MCF 10A (cell line): ENCODE measurements at regions of chr1 and their contacts with region 1.

Region 1: DNA sequence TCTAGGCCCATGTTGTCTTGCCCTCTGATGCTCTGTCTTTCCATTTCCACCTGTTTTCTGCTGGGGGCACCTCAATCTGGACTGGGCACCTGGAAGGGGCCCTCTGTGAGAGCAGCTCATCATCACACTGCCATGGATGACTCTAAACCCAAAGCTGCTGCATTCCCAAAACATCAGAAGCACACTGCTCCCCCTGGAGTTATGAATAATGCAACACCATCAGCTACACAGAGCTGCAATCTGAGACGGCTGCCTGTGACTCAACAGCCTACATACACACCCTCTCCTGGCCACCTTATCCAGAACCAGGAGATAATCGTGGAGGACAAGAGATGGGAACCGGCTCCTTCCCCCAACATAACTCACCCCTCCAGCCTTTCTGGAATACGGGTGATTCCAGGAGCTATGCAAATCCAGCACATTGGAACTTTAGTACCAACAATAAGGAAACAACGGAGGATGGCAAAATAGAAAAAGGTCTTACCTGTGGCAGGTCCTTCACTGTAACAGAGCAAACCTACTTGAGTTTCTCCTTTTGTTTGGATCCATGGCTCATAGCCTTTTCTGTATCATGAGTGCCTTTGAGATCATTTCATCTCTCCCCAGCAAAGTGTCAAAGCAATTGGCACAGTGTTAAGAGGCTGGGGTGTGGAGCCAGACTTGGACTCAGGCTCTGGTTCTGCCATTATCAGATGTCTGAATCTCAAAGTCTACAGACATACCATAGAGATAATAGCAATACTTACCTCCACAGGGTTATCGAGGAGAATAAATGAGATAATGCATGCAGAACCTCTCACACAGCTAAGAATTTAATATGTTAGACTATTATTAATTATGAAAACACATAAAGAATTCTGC is 29.3 kb downstream of the AK2 start:
- DNase-seq: peak; percentile 94
- H3K4me3 Mint-ChIP-seq: no peak overlapping the region
- H3K27ac Mint-ChIP-seq: peak overlapping the region; percentile 89
- H3K4me1 Mint-ChIP-seq: peaks cover 61% of the 10 kb centered on the region
- H3K27me3 Mint-ChIP-seq: no peaks in the 10 kb centered on the region
- CTCF ChIP-seq: peak; percentile 61

Region 2: DNA sequence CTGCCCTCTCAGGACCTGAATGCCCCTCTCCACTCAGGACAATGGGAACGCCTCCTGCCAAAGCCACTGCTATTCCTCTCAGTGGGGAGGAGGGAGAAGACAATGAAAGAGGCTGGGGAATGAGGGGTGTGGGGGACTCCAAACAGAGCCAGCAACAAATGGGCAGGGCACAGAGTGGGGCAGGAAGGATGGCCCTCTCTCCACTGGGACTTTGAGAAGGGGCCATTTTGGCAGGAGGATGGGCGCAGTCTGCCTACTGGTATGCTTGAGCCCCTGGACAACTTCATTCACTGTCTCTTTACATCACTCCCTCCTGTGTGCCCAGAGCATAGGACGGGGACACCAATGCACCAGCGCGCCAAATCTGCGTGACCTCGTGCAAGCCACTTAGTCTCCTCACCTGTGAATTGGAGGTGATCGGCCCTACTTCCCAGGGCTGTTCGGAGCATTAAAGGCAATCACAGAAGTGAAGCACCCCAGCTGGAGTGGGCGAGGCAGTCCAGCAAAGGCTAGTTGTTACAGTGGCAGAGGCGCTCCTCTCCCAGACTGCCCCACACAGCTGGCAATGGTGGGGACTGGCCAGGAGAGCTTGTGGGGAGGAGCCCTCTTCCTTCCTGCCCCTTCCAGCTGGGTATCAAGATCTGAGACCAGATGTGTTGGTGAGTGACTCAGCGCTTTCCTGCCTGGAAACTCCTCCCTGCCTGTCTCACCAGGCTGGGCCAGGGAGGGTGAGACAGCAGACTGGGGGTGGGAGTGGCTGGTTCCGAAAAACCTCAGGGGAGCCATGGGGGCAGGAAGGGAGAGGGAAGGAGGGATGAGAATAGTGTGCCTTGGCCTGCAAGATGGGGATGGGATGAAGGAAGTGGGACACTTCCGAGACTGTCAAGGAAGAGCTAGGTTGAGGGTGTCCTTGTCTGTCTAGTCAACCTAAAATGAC is 282.5 kb before region 1 on chr1:
- CTCF ChIA-PET with region 1: no interaction called
- POLR2A ChIA-PET with region 1: no interaction called
- intact Hi-C with region 1: no loop called
- DNase-seq: peak; percentile 93
- H3K4me3 Mint-ChIP-seq: no peak overlapping the region
- H3K27ac Mint-ChIP-seq: peak overlapping the region; percentile 71
- H3K4me1 Mint-ChIP-seq: peaks cover 16% of the 10 kb centered on the region
- H3K27me3 Mint-ChIP-seq: no peaks in the 10 kb centered on the region
- CTCF ChIP-seq: no peak

Region 3: GRCh38 chr1:32933742-32934322 is 73.6 kb before region 1 on chr1:
- CTCF ChIA-PET with region 1: interaction called, 140 read pairs
- POLR2A ChIA-PET with region 1: interaction called, 63 read pairs
- intact Hi-C with region 1: loop called (anchors 1 kb)
- DNase-seq: peak; percentile 47
- H3K4me3 Mint-ChIP-seq: peak overlapping the region; percentile 2
- H3K27ac Mint-ChIP-seq: no peak overlapping the region
- H3K4me1 Mint-ChIP-seq: peaks cover 10% of the 10 kb centered on the region
- H3K27me3 Mint-ChIP-seq: no peaks in the 10 kb centered on the region
- CTCF ChIP-seq: no peak

Region 4: DNA sequence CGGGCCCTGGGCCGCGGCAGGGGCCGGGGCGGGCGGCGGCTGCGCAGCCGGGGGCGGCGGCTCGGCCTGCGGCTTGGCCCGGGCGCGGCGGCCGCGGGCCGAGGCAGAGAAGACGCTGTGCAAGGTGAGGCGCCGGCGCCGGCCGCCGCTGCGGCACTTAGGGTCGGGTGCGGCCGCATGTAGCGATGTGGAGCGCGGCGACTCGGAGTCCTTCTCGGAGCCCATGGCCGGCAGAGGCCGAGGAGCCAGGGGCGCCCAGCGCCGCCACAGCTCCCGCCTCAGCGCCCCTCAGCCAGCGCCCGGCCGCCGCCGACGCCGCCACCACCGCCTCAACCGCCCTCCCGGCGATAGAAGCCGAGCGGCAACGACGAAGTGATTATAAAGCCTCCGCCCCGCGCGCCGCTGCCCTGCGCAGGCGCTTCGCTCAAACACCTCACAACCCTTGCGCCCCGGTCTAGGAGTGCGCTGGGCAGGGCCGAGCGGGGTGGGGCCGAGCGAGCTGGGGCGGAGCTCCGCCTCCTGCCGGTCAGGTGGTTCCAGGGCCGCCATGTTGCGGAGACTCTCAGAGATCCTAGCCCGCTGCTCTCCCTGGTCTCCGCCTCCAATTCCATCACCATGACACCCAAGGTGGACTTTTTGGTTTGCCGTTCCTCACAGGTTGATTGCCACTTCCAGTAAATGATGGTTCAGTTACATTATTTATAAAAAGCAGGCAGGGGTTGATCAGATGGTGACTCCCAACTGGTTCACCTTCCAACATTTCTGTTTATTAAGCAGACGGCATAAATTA is 42.8 kb before region 1 on chr1 and contains the start of gene RNF19B:
- CTCF ChIA-PET with region 1: interaction called, 12 read pairs
- POLR2A ChIA-PET with region 1: interaction called, 125 read pairs
- intact Hi-C with region 1: loop called (anchors 1 kb)
- DNase-seq: peak; percentile 95
- H3K4me3 Mint-ChIP-seq: peak within 1 kb of the TSS; percentile 84
- H3K27ac Mint-ChIP-seq: peak within 1 kb of the TSS; percentile 69
- H3K4me1 Mint-ChIP-seq: peaks cover 29% of the 10 kb centered on the region
- H3K27me3 Mint-ChIP-seq: no peaks in the 10 kb centered on the region
- CTCF ChIP-seq: no peak
- total RNA-seq, gene RNF19B: 38.0 and 41.3 TPM in 2 replicates

Region 5: GRCh38 chr1:32992489-32993323 is 14.7 kb before region 1 on chr1:
- CTCF ChIA-PET with region 1: interaction called, 71 read pairs
- POLR2A ChIA-PET with region 1: interaction called, 248 read pairs
- intact Hi-C with region 1: loop called (anchors 1 kb)
- DNase-seq: peak; percentile 94
- H3K4me3 Mint-ChIP-seq: peak overlapping the region; percentile 48
- H3K27ac Mint-ChIP-seq: peak overlapping the region; percentile 92
- H3K4me1 Mint-ChIP-seq: peaks cover 42% of the 10 kb centered on the region
- H3K27me3 Mint-ChIP-seq: no peaks in the 10 kb centered on the region
- CTCF ChIP-seq: no peak

Region 6: GRCh38 chr1:33055210-33056008 is 48.0 kb after region 1 on chr1:
- CTCF ChIA-PET with region 1: interaction called, 16 read pairs
- POLR2A ChIA-PET with region 1: interaction called, 8 read pairs
- intact Hi-C with region 1: no loop called
- DNase-seq: peak; percentile 88
- H3K4me3 Mint-ChIP-seq: no peak overlapping the region
- H3K27ac Mint-ChIP-seq: peak overlapping the region; percentile 36
- H3K4me1 Mint-ChIP-seq: peaks cover 17% of the 10 kb centered on the region
- H3K27me3 Mint-ChIP-seq: no peaks in the 10 kb centered on the region
- CTCF ChIP-seq: peak; percentile 57

Region 7: GRCh38 chr1:33094971-33095604 is 87.7 kb after region 1 on chr1:
- CTCF ChIA-PET with region 1: no interaction called
- POLR2A ChIA-PET with region 1: no interaction called
- intact Hi-C with region 1: no loop called
- DNase-seq: peak; percentile 70
- H3K4me3 Mint-ChIP-seq: no peak overlapping the region
- H3K27ac Mint-ChIP-seq: no peak overlapping the region
- H3K4me1 Mint-ChIP-seq: peaks cover 18% of the 10 kb centered on the region
- H3K27me3 Mint-ChIP-seq: no peaks in the 10 kb centered on the region
- CTCF ChIP-seq: peak; percentile 91

Region 8: GRCh38 chr1:33367485-33368405 is 360.3 kb after region 1 on chr1:
- CTCF ChIA-PET with region 1: no interaction called
- POLR2A ChIA-PET with region 1: no interaction called
- intact Hi-C with region 1: no loop called
- DNase-seq: peak; percentile 84
- H3K4me3 Mint-ChIP-seq: no peak overlapping the region
- H3K27ac Mint-ChIP-seq: no peak overlapping the region
- H3K4me1 Mint-ChIP-seq: peaks cover 6% of the 10 kb centered on the region
- H3K27me3 Mint-ChIP-seq: no peaks in the 10 kb centered on the region
- CTCF ChIP-seq: peak; percentile 95